Activated CD8-positive, alpha-beta T cell treated with anti-CD3 and anti-CD28 coated beads for 36 hours (primary cell): ENCODE measurements at regions of chr3 and their contacts with region 1.

Region 1: DNA sequence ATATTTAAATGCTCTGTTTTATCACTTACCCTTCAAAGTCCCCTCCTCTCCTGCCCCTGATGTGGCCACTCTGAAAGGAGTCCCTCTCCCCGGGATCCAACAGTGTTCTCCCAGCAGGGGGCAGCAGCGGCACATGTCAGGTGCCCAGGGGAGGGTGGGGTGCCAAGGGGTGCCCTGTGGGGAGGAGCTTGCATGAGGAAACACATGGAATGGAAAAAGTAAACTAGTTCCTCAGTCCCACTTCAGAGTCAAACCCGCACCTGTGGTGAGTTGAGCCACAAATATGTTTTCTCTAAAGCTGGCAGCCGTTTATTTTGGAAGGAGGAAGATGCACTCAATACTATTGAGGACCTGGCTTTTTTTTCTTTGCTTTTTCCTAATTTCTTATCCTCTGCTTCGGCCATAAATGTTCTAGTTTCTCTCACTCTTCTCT is 30.1 kb upstream of the NRROS start:
- DNase-seq: peak; percentile 96
- ATAC-seq: peak; percentile 94
- H3K4me3 Mint-ChIP-seq: peak overlapping the region; percentile 35
- H3K27ac Mint-ChIP-seq: peak overlapping the region; percentile 81
- H3K4me1 Mint-ChIP-seq: peaks cover 34% of the 10 kb centered on the region
- H3K27me3 Mint-ChIP-seq: no peaks in the 10 kb centered on the region
- CTCF ChIP-seq: peak; percentile 93

Region 2: GRCh38 chr3:196378146-196378841 is 231.1 kb before region 1 on chr3:
- CTCF ChIA-PET with region 1: no interaction called
- POLR2A ChIA-PET with region 1: no interaction called
- intact Hi-C with region 1: no loop called
- DNase-seq: peak; percentile 43
- ATAC-seq: no peak
- H3K4me3 Mint-ChIP-seq: no peak overlapping the region
- H3K27ac Mint-ChIP-seq: no peak overlapping the region
- H3K4me1 Mint-ChIP-seq: peaks cover 10% of the 10 kb centered on the region
- H3K27me3 Mint-ChIP-seq: no peaks in the 10 kb centered on the region
- CTCF ChIP-seq: no peak

Region 3: GRCh38 chr3:196624067-196624790 is 14.9 kb after region 1 on chr3:
- CTCF ChIA-PET with region 1: interaction called, 13 read pairs
- POLR2A ChIA-PET with region 1: interaction called, 4 read pairs
- intact Hi-C with region 1: no loop called
- DNase-seq: peak; percentile 88
- ATAC-seq: peak; percentile 77
- H3K4me3 Mint-ChIP-seq: peak overlapping the region; percentile 65
- H3K27ac Mint-ChIP-seq: peak overlapping the region; percentile 95
- H3K4me1 Mint-ChIP-seq: peaks cover 51% of the 10 kb centered on the region
- H3K27me3 Mint-ChIP-seq: no peaks in the 10 kb centered on the region
- CTCF ChIP-seq: no peak

Region 4: DNA sequence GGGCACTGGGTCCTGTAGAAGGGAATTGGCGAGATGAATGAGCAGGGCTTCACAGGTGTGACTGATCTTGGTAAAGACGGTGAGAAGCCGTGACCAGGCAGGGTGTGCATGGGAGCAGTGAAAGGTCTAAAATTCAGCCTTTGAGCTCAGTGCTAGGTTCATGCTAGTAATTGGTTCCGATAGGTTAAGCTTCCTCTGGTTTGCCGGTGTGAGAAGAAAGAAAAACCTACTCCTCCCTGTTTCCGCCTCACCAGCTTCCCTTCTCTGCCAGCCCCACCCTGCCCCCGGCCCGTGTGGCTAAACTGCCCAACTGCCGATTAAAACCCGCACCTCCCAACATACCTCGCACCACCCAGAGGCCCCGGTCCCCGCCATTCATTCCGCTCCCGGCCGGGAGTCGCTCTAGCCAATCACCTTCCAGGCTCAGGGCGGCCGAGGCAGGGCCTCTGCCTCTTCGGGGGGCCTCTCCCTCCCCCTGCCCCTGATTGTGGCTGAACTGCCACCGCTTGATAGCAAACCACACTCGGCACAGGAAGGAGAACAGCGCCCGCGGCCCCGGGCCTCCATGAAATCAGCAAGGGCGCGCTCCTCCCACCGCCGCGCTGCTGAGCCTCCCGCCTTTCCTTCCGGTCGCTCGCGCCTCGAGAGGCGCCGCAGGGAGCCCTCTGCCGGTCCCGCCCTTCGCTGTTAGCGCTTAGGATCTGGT is 22.8 kb after region 1 on chr3:
- CTCF ChIA-PET with region 1: interaction called, 13 read pairs
- POLR2A ChIA-PET with region 1: interaction called, 18 read pairs
- intact Hi-C with region 1: no loop called
- DNase-seq: peak; percentile 96
- ATAC-seq: peak; percentile 83
- H3K4me3 Mint-ChIP-seq: peak overlapping the region; percentile 79
- H3K27ac Mint-ChIP-seq: peak overlapping the region; percentile 95
- H3K4me1 Mint-ChIP-seq: peaks cover 49% of the 10 kb centered on the region
- H3K27me3 Mint-ChIP-seq: no peaks in the 10 kb centered on the region
- CTCF ChIP-seq: peak; percentile 24

Region 5: DNA sequence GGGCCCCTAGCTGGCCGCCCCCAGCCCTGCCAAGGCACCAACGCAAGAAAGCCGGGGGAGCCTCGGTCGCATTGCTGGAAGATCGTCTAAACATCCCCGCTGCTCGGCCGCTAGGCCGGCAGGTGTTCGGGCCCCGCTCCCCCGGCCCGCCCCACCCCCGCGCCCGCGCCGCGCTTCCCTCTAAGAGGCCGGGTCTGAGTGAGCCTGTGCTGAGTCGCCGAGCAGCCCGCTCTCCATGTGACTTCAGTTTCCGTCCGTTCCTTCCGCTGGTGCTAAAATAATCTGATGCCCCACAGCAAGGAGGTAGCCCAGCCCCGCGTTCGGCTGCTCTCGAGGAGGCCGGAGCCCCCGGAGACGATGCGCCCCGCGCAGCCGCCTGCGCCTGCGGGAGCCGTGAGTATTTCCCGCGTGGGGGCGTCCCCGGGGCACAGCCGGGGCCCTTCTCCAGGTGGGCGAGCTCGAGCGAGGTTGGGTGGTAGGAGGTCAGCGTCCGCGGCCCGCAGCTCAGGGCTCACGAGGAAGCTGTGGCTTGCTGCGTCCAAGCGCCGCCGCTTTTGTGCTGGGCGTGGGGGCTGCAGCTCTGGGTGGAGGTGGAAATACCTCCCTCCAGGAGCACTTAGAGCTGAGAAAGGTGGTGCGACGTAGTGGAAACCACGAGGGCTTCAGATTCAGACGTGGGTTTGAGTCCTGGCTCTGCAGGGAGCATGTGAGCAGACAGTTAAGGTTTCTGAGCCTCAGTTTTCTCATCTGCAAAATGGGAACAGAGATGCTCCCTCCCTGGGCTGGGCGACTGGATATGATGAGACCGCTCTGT is 30.3 kb after region 1 on chr3 and contains the start of gene NRROS:
- CTCF ChIA-PET with region 1: interaction called, 15 read pairs
- POLR2A ChIA-PET with region 1: interaction called, 30 read pairs
- intact Hi-C with region 1: loop called (anchors 5 kb)
- DNase-seq: peak; percentile 85
- ATAC-seq: peak; percentile 76
- H3K4me3 Mint-ChIP-seq: peak within 1 kb of the TSS; percentile 86
- H3K27ac Mint-ChIP-seq: peak within 1 kb of the TSS; percentile 90
- H3K4me1 Mint-ChIP-seq: peaks cover 51% of the 10 kb centered on the region
- H3K27me3 Mint-ChIP-seq: no peaks in the 10 kb centered on the region
- CTCF ChIP-seq: no peak
- total RNA-seq, gene NRROS: 24.2 to 26.5 TPM

Region 6: GRCh38 chr3:196645096-196645495 is 35.7 kb after region 1 on chr3:
- CTCF ChIA-PET with region 1: interaction called, 15 read pairs
- POLR2A ChIA-PET with region 1: interaction called, 30 read pairs
- intact Hi-C with region 1: loop called (anchors 5 kb)
- DNase-seq: peak; percentile 53
- ATAC-seq: no peak
- H3K4me3 Mint-ChIP-seq: no peak overlapping the region
- H3K27ac Mint-ChIP-seq: peak overlapping the region; percentile 22
- H3K4me1 Mint-ChIP-seq: peaks cover 57% of the 10 kb centered on the region
- H3K27me3 Mint-ChIP-seq: no peaks in the 10 kb centered on the region
- CTCF ChIP-seq: no peak

Region 7: DNA sequence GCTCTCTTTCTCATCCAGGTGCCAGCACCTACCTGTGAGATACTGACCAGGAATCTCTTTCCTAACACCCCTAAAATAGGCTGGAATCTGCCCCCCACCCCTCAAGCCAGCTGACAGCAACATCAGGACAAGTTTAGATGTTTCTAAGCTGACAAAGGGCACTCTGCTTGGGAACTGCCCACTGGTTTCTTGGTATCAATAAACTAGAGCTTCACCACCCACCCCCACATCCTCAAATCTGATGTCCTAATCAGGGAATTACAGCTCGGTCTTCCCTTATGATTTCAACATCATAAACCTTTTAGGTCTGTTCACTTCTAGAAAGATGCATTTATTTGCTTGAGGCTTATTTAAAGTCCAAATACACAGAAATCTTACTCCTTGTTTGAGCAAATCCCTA is 68.0 kb after region 1 on chr3:
- CTCF ChIA-PET with region 1: interaction called, 15 read pairs
- POLR2A ChIA-PET with region 1: no interaction called
- intact Hi-C with region 1: no loop called
- DNase-seq: no peak
- ATAC-seq: no peak
- H3K4me3 Mint-ChIP-seq: no peak overlapping the region
- H3K27ac Mint-ChIP-seq: no peak overlapping the region
- H3K4me1 Mint-ChIP-seq: peaks cover 9% of the 10 kb centered on the region
- H3K27me3 Mint-ChIP-seq: no peaks in the 10 kb centered on the region
- CTCF ChIP-seq: no peak

Region 8: DNA sequence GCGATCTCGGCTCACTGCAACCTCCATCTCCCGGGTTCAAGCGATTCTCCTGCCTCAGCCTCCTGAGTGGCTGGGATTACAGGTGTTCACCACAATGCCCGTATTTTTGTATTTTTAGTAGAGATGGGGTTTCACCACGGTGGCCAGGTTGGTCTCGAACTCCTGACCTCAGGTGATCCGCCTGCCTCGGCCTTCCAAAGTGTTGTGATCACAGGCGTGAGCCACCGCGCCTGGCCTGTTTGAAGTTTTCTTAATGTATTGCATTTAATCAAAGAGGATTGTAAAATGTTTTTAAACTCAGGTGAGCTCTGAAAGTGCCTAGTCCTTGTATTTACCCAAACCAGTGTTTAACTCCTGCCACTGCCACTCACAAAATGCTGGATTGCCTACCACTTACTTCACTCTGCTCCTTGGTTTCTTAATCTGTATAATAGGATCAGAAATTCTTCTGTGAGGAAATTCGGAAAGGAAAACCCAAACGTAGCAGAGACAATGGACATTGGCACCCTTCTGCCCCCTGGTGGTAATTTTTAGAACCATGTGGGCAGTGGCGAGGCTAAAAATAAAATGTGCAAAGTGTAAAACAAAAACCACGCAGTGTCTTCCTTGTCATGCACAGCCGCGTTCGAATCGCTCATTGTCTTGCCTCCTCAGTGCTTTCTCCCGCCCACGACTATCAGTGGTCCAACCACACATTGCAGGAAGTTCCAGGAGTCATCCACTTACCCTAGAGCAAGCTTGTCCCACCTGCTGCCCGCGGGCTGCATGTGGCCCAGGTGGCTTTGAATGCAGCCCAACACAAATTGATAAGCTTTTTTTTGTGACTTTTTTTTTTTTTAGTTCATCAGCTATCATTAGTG is 75.4 kb after region 1 on chr3:
- CTCF ChIA-PET with region 1: interaction called, 310 read pairs
- POLR2A ChIA-PET with region 1: interaction called, 11 read pairs
- intact Hi-C with region 1: loop called (anchors 2 kb)
- DNase-seq: peak; percentile 88
- ATAC-seq: peak; percentile 94
- H3K4me3 Mint-ChIP-seq: peak overlapping the region; percentile 24
- H3K27ac Mint-ChIP-seq: peak overlapping the region; percentile 79
- H3K4me1 Mint-ChIP-seq: peaks cover 14% of the 10 kb centered on the region
- H3K27me3 Mint-ChIP-seq: no peaks in the 10 kb centered on the region
- CTCF ChIP-seq: peak; percentile 93

Region 9: GRCh38 chr3:196794467-196794866 is 185.1 kb after region 1 on chr3:
- CTCF ChIA-PET with region 1: no interaction called
- POLR2A ChIA-PET with region 1: no interaction called
- intact Hi-C with region 1: no loop called
- DNase-seq: no peak
- ATAC-seq: no peak
- H3K4me3 Mint-ChIP-seq: no peak overlapping the region
- H3K27ac Mint-ChIP-seq: no peak overlapping the region
- H3K4me1 Mint-ChIP-seq: peaks cover 17% of the 10 kb centered on the region
- H3K27me3 Mint-ChIP-seq: no peaks in the 10 kb centered on the region
- CTCF ChIP-seq: no peak